IMR-90 (cell line): ENCODE measurements at regions of chr12 and their contacts with region 1.

Region 1: DNA sequence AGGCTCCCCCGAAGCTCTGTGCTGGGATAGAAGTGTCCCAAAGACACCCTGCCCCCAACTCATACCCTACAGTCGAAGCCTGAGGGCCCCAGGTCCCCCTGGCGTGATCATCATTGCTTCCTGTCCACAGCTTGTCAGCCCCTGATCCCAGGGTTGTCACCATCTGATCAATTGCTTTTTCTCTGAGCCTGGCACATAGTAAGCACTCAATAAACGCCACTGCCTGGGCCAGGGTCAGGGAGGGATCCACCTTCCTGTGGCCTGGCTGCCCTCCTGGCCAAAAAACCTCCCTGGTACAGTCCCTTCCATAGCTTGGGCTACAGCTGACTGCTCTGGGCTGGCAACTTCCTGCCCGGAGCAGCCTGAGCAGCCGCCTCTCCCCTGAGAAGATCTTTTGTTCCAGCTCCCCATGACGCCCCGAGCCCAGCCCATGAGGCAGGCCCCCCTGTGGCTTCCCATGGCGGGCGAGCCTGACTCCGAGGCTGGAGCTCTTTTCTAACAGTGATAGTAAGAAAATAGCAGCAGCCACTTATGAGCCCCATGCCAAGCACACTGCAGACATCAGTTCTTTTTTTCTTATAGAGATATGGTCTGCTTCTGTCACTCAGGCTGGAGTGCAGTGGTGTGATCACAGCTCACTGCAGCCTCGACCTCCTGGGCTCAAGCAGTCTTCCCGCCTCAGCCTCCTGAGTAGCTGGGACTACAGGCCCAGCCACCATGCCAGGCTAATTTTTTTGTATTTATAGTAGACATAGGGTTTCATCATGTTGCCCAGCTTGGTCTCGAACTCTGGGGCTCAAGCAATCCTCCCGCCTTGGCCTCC is 6.5 kb downstream of the SH2B3 start:
- DNase-seq: no peak
- ATAC-seq: no peak
- H3K4me3 ChIP-seq: no peak overlapping the region
- H3K27ac ChIP-seq: peak overlapping the region; percentile 31
- H3K4me1 ChIP-seq: peaks cover 41% of the 10 kb centered on the region
- H3K27me3 ChIP-seq: no peaks in the 10 kb centered on the region
- CTCF ChIP-seq: no peak
- POLR2A ChIP-seq: no peak
- RAD21 ChIP-seq: no peak

Region 2: GRCh38 chr12:111389635-111390034 is 22.6 kb before region 1 on chr12:
- CTCF ChIA-PET with region 1: no interaction called
- POLR2A ChIA-PET with region 1: no interaction called
- dilution Hi-C with region 1: no loop called
- in situ Hi-C with region 1: no loop called
- intact Hi-C with region 1: no loop called
- DNase-seq: no peak
- ATAC-seq: no peak
- H3K4me3 ChIP-seq: no peak overlapping the region
- H3K27ac ChIP-seq: no peak overlapping the region
- H3K4me1 ChIP-seq: 0 out of 2 replicates have a peak, but pooled peaks cover 3% of the 10 kb centered on the region
- H3K27me3 ChIP-seq: peaks cover 14% of the 10 kb centered on the region
- CTCF ChIP-seq: no peak
- POLR2A ChIP-seq: no peak
- RAD21 ChIP-seq: no peak

Region 3: DNA sequence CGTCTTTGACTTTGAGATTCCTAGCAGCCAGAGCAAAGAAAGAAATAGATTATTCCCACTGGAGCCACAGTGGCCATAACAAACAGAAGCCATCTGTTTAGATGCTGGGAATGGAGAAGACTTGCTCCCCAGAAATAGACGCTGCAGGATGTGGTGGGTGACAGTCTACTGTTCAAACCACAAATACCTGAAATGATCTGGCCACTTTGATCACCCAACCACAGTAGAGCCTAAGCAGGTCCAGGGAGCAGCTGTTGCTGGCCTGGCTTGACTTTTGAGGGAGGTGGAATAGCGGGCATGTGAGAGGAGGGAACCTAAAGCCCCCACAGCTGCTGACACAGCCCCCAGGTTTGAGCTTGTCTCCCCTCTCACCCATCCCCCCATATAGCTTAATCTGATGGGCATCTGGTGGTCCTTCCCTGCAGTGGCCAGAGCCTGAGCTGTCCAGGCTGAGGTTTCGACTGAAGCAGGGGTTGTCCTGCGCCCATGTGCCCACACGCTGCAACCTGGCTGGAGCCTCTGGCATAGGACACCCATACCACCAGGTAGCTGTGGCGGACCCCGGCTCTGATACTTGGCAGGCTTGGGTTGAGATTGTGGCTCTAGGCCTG is 32.2 kb after region 1 on chr12:
- CTCF ChIA-PET with region 1: no interaction called
- POLR2A ChIA-PET with region 1: interaction called, 10 read pairs
- dilution Hi-C with region 1: no loop called
- in situ Hi-C with region 1: no loop called
- intact Hi-C with region 1: no loop called
- DNase-seq: no peak
- ATAC-seq: no peak
- H3K4me3 ChIP-seq: no peak overlapping the region
- H3K27ac ChIP-seq: no peak overlapping the region
- H3K4me1 ChIP-seq: peaks cover 16% of the 10 kb centered on the region
- H3K27me3 ChIP-seq: no peaks in the 10 kb centered on the region
- CTCF ChIP-seq: no peak
- POLR2A ChIP-seq: no peak
- RAD21 ChIP-seq: no peak

Region 4: GRCh38 chr12:111462210-111462769 is 50.1 kb after region 1 on chr12:
- CTCF ChIA-PET with region 1: no interaction called
- POLR2A ChIA-PET with region 1: no interaction called
- dilution Hi-C with region 1: no loop called
- in situ Hi-C with region 1: no loop called
- intact Hi-C with region 1: no loop called
- DNase-seq: peak; percentile 87
- ATAC-seq: peak; percentile 84
- H3K4me3 ChIP-seq: no peak overlapping the region
- H3K27ac ChIP-seq: peak overlapping the region; percentile 56; the same call in 1 of the 2 replicates
- H3K4me1 ChIP-seq: peaks cover 12% of the 10 kb centered on the region
- H3K27me3 ChIP-seq: no peaks in the 10 kb centered on the region
- CTCF ChIP-seq: no peak
- POLR2A ChIP-seq: no peak
- RAD21 ChIP-seq: no peak